Activated naive CD8-positive, alpha-beta T cell treated with anti-CD3 and anti-CD28 coated beads, Interleukin-2, amount 10 ng/mL, durations not matched to agents 7 days and 5 days (primary cell): ENCODE measurements at regions of chr22 and their contacts with region 1.

Region 1: DNA sequence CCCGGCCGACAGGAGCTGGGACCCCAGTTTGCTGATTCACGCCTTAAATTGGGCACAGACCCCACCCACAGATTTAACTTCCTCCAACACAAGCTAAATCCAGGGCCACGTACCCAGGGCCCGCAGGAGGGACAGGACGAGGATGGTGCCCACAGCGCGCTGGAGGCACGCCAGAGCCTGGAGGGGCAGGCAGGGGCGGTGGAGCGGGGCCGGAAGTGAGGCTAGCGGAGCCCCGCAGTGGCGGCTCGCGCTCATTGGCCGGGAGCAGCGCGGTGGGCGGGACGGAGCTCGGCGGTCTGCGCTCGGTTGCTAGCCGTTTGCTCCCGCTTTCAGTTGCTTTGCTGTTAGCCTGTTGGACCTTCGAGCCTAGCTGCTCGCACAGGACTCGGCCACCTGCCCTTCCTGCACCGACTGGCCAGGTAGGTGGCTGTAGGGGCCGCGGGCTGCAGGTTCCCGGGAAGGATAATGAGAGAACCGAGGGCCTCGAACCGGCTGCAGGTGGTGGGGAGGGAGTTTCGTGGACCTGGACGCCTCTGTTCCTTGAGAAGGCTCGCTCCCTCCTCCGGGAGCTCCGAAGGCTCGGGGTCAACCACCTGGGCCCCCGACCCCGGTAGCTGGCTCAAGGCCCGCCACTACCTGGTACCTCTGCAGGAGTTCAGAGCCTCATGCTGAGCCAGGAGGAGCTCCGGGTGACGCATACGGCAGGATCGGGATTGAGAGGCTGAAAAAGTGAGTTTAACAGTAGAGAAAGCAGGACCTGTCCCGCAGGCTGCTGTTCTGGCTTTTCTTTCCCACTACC is at the start of gene CCDC134:
- DNase-seq: peak; percentile 94
- ATAC-seq: peak; percentile 97
- H3K4me3 Mint-ChIP-seq: peak within 1 kb of the TSS; percentile 98
- H3K27ac Mint-ChIP-seq: peak within 1 kb of the TSS; percentile 97
- H3K4me1 Mint-ChIP-seq: peaks cover 40% of the 10 kb centered on the region
- H3K27me3 Mint-ChIP-seq: no peaks in the 10 kb centered on the region
- total RNA-seq, gene CCDC134: 28.2 to 29.2 TPM

Region 2: DNA sequence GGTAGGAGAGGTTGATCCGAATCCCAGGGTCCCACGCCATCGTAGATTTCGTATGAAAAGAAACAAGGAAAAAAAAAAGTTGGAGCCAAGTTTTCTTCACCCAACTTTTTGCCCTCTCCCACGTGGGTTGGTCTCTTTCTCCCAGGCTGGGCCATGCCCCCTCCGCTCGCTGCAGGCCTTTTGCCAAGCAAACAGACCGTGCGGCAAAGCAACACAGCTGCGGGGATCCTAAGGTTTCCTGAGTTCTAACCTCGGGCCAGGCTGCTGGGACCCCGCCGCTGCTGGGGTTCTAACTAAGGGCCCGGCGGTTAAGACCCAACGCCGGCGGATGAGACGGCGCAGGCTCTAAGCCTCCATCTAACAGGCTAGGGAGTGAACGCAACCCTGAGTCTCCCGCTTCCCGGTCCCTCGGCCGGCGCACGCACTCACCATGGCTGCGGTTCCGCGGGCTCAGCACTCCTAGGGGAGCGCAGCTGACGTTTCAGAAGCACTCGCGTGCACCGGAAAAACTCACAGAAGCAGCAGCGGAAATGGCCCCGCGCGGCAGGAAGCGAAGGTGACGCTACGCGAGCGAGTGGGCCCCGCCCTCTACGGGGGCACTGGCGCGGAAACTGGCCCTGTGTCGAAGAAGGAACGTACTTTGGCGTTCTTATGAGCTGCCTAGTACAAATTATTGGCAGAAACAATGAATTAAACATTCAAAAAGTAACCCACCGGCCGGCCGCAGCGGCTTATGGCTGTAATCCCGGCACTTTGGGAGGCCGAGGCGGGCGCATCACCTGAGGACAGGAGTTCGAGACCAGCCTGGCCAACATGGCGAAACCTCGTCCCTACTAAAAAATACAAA is 112.0 kb before region 1 on chr22 and contains the start of gene SNU13:
- POLR2A ChIA-PET with region 1: interaction called, 19 read pairs
- DNase-seq: peak; percentile 91
- ATAC-seq: peak; percentile 90
- H3K4me3 Mint-ChIP-seq: peak within 1 kb of the TSS; percentile 95
- H3K27ac Mint-ChIP-seq: peak within 1 kb of the TSS; percentile 99
- H3K4me1 Mint-ChIP-seq: peaks cover 22% of the 10 kb centered on the region
- H3K27me3 Mint-ChIP-seq: no peaks in the 10 kb centered on the region
- total RNA-seq, gene SNU13: 150 to 153 TPM

Region 3: GRCh38 chr22:41780746-41781505 is 19.6 kb before region 1 on chr22:
- POLR2A ChIA-PET with region 1: interaction called, 250 read pairs
- DNase-seq: peak; percentile 76
- ATAC-seq: peak; percentile 99
- H3K4me3 Mint-ChIP-seq: peak overlapping the region; percentile 82
- H3K27ac Mint-ChIP-seq: peak overlapping the region; percentile 96
- H3K4me1 Mint-ChIP-seq: peaks cover 39% of the 10 kb centered on the region
- H3K27me3 Mint-ChIP-seq: no peaks in the 10 kb centered on the region

Region 4: GRCh38 chr22:41832553-41833368 is 32.2 kb after region 1 on chr22 and contains the start of gene SREBF2:
- POLR2A ChIA-PET with region 1: interaction called, 90 read pairs
- DNase-seq: peak; percentile 97
- ATAC-seq: peak; percentile 97
- H3K4me3 Mint-ChIP-seq: peak within 1 kb of the TSS; percentile 97
- H3K27ac Mint-ChIP-seq: peak within 1 kb of the TSS; percentile 99
- H3K4me1 Mint-ChIP-seq: peaks cover 32% of the 10 kb centered on the region
- H3K27me3 Mint-ChIP-seq: no peaks in the 10 kb centered on the region
- total RNA-seq, gene SREBF2: 108 to 109 TPM

Region 5: DNA sequence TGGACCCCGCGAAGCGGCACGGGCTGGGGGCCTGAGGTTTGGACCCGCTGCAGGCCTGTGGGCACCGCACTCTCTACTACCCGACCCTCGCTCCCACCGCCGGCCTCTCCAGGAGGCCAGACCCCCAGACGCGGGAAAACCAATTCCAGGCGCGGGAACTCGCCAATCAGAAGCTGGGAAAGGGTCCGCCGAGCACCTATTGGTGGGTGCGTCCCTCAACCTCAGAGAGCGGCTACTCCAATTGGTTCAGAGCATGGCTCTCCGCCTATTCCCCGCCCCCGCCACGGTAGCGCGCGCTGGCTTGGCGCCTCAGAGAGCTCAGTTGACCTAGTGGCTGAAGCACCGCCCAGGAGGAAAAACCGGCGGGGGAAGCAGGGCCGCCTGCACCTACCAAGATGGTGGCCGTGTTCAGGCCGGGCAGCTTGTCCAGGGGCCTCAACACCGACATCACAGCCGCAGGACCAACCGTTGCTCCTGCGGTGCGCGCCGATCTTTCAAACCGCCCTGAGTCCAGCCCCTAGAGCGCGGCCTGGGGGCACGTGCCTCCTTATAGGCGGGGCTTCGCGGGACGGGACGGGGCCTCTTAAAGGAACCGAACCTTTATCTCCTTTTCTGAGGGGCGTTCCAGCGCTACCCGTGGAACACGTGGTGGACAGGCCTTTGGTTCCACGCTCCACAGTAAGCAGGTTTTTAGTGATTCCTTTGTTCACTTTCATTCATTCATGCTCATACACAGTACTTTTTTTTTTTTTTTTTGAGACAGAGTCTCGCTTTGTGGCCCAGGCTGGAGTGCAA is 146.3 kb after region 1 on chr22 and contains the start of gene CENPM:
- POLR2A ChIA-PET with region 1: interaction called, 25 read pairs
- DNase-seq: peak; percentile 94
- ATAC-seq: peak; percentile 98
- H3K4me3 Mint-ChIP-seq: peak within 1 kb of the TSS; percentile 94
- H3K27ac Mint-ChIP-seq: peak within 1 kb of the TSS; percentile 91
- H3K4me1 Mint-ChIP-seq: peaks cover 31% of the 10 kb centered on the region
- H3K27me3 Mint-ChIP-seq: no peaks in the 10 kb centered on the region
- total RNA-seq, gene CENPM: 45.4 to 53.2 TPM